CD4-positive, alpha-beta memory T cell (primary cell): ENCODE measurements at regions of chr5 and their contacts with region 1.

Region 1: DNA sequence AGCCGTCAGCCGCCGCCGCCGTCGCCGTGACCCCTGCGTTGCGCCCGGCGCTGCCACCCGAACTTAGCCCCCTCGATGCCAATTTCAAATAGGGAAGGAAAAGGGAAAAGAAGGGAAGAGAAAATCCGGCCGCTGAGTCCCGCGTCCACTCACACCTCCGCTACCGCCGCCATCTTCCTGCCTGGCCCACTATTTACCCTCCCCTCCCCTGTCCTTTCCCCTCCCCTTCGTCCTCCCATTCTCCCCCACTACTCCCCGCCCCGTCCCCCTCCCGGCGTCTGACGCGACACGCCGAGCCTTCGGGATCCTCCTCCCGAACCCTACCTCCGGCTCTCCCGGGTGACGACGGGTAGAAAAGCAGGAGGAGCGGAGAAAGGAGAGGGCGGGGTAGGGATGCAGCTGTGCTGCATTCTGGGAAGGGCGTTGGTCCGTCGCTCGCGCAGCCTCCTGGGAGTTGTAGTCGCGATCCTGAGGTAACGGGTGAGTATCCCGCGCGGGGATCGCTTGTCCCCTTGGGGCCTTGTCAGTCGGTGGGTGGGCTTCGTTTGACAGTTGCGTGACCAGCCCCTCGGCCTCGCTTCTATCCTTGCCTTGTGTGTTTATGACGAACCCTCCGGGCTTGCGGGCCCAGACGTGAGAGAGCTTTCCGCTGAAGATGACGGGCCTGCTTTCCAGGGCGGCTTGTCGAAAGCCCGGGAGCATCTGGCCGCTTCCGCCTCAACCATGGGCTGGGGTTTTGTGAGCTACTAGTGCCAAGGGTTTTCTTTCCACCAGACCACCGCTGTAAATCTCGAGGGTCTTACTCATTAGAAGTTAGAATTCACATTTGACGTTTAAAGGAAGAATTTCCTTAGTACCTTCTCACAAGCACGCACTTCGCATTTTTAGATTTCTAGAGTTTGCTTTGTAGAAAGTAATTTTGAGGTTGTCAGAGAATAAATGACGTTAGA is at the starts of genes CERT1 and POLK:
- DNase-seq: peak; percentile 92 to 97 (median 94)
- H3K4me3 ChIP-seq: peak within 1 kb of the TSS; percentile 54 to 81
- H3K4me3 Mint-ChIP-seq: peak within 1 kb of the TSS; percentile 90 to 97 (median 96)
- H3K27ac ChIP-seq: peak within 1 kb of the TSS; percentile 76
- H3K27ac Mint-ChIP-seq: peak within 1 kb of the TSS; percentile 94 to 98 (median 96)
- H3K4me1 ChIP-seq: peaks cover 44% of the 10 kb centered on the region
- H3K4me1 Mint-ChIP-seq: peaks cover 39 to 65% (median 49%) of the 10 kb centered on the region in 4 donors
- H3K27me3 ChIP-seq: no peaks in the 10 kb centered on the region
- H3K27me3 Mint-ChIP-seq: no peaks in the 10 kb centered on the region
- total RNA-seq, gene CERT1: 43.8 to 49.7 TPM
- total RNA-seq, gene POLK: 30.0 to 30.4 TPM

Region 2: GRCh38 chr5:74766849-74767578 is 744.7 kb before region 1 on chr5 and contains the starts of genes GFM2 and NSA2:
- CTCF ChIA-PET with region 1: no interaction called
- POLR2A ChIA-PET with region 1: interaction called, 3 read pairs
- intact Hi-C with region 1: loop called (anchors 10 kb)
- DNase-seq: peak; percentile 92 to 94 (median 92)
- H3K4me3 ChIP-seq: peak within 1 kb of the TSS; percentile 93 to 100
- H3K4me3 Mint-ChIP-seq: peak within 1 kb of the TSS; percentile 95 to 100 (median 100)
- H3K27ac ChIP-seq: peak within 1 kb of the TSS; percentile 86
- H3K27ac Mint-ChIP-seq: peak within 1 kb of the TSS; percentile 91 to 99 (median 99)
- H3K4me1 ChIP-seq: peaks cover 35% of the 10 kb centered on the region
- H3K4me1 Mint-ChIP-seq: peaks cover 22 to 51% (median 35%) of the 10 kb centered on the region in 4 donors
- H3K27me3 ChIP-seq: no peaks in the 10 kb centered on the region
- H3K27me3 Mint-ChIP-seq: no peaks in the 10 kb centered on the region
- total RNA-seq, gene GFM2: 21.3 to 21.6 TPM
- total RNA-seq, gene NSA2: 103 to 120 TPM

Region 3: DNA sequence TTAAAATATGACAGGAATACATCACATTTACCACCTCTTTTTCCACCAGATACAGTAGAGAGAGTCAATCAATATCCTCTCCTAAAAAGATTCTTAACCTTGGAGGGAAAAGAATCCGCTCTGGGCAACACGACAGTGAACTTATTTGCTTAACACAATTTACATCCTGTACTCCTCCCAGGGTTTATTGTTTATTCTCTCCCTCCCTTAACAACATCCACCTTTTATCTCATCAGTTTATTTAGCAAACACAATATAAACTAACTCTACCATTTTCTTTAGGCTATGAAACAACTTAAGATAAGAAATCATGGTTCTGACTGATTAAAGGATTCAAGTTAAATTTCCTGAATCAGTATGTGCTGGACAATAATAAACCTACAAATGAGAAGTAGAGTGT is 51.2 kb before region 1 on chr5:
- CTCF ChIA-PET with region 1: no interaction called
- POLR2A ChIA-PET with region 1: no interaction called
- intact Hi-C with region 1: no loop called
- DNase-seq: no peak
- H3K4me3 ChIP-seq: no peak overlapping the region
- H3K4me3 Mint-ChIP-seq: no peak overlapping the region
- H3K27ac ChIP-seq: no peak overlapping the region
- H3K27ac Mint-ChIP-seq: no peak overlapping the region
- H3K4me1 ChIP-seq: peaks cover 3% of the 10 kb centered on the region
- H3K4me1 Mint-ChIP-seq: peaks cover 26 to 46% (median 32%) of the 10 kb centered on the region in 4 donors
- H3K27me3 ChIP-seq: no peaks in the 10 kb centered on the region
- H3K27me3 Mint-ChIP-seq: no peaks in the 10 kb centered on the region

Region 4: GRCh38 chr5:75498208-75498777 is 13.4 kb before region 1 on chr5:
- CTCF ChIA-PET with region 1: no interaction called
- POLR2A ChIA-PET with region 1: no interaction called
- intact Hi-C with region 1: loop called (anchors 1 kb)
- DNase-seq: no peak
- H3K4me3 ChIP-seq: no peak overlapping the region
- H3K4me3 Mint-ChIP-seq: no peak overlapping the region
- H3K27ac ChIP-seq: no peak overlapping the region
- H3K27ac Mint-ChIP-seq: no peak overlapping the region
- H3K4me1 ChIP-seq: no peaks in the 10 kb centered on the region
- H3K4me1 Mint-ChIP-seq: peaks cover 6 to 27% (median 19%) of the 10 kb centered on the region in 4 donors
- H3K27me3 ChIP-seq: no peaks in the 10 kb centered on the region
- H3K27me3 Mint-ChIP-seq: no peaks in the 10 kb centered on the region

Region 5: GRCh38 chr5:75611311-75612225 is 99.9 kb after region 1 on chr5 and contains the start of gene ANKDD1B:
- CTCF ChIA-PET with region 1: no interaction called
- POLR2A ChIA-PET with region 1: no interaction called
- intact Hi-C with region 1: no loop called
- DNase-seq: no peak
- H3K4me3 ChIP-seq: no peak within 1 kb of the TSS
- H3K4me3 Mint-ChIP-seq: peak within 1 kb of the TSS in 6 of 8 donors; percentile 6 to 53 (median 20)
- H3K27ac ChIP-seq: no peak within 1 kb of the TSS
- H3K27ac Mint-ChIP-seq: no peak within 1 kb of the TSS
- H3K4me1 ChIP-seq: peaks cover 9% of the 10 kb centered on the region
- H3K4me1 Mint-ChIP-seq: peaks cover 3 to 6% (median 6%) of the 10 kb centered on the region in 4 donors
- H3K27me3 ChIP-seq: no peaks in the 10 kb centered on the region
- H3K27me3 Mint-ChIP-seq: peaks cover 3 to 5% of the 10 kb centered on the region in 2 donors
- total RNA-seq, gene ANKDD1B: 0.61 to 0.73 TPM

Region 6: DNA sequence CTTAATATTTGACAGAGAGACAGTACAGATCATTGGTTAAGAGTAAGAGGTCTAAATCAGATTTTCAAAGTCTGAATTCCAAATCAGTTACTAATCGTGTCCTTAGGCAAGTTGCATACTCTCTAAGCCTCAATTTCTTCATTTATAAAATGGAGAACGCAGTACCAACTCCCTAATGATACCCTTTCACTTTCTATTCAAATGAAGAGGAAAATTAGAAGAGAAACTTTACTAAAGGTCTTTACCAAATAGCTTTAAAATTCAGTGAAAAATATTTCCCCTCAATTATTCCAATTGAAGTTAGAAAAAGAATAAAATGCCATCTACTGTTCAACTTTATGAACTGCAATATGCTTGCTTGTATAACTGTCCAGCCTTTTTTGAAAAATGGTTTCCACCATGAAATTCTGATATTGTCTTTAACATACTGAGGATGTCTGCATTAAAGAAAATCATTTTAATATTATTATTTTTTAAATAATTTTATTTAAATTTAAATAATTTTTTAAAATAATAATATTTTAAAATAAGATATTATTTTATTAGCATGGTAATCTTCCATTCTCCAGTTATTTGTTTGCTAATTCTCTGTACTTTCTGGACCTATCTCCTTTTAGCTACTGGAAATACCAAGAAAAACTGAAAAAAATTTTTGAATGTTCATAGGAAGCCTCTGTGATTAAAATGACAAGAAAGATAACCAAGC is 169.6 kb after region 1 on chr5:
- CTCF ChIA-PET with region 1: no interaction called
- POLR2A ChIA-PET with region 1: interaction called, 3 read pairs
- intact Hi-C with region 1: loop called (anchors 5 kb)
- DNase-seq: peak in 4 of 5 donors; percentile 26 to 39 (median 34)
- H3K4me3 ChIP-seq: no peak overlapping the region
- H3K4me3 Mint-ChIP-seq: no peak overlapping the region
- H3K27ac ChIP-seq: no peak overlapping the region
- H3K27ac Mint-ChIP-seq: peak overlapping the region in 1 of 7 donors; percentile 29
- H3K4me1 ChIP-seq: peaks cover 5% of the 10 kb centered on the region
- H3K4me1 Mint-ChIP-seq: peaks cover 5 to 11% (median 9%) of the 10 kb centered on the region in 4 donors
- H3K27me3 ChIP-seq: no peaks in the 10 kb centered on the region
- H3K27me3 Mint-ChIP-seq: no peaks in the 10 kb centered on the region

Region 7: GRCh38 chr5:76818844-76819831 is 1307.4 kb after region 1 on chr5 and contains the start of gene F2RL1:
- CTCF ChIA-PET with region 1: no interaction called
- POLR2A ChIA-PET with region 1: no interaction called
- intact Hi-C with region 1: loop called (anchors 1 kb)
- DNase-seq: peak; percentile 43 to 58 (median 48)
- H3K4me3 ChIP-seq: peak within 1 kb of the TSS; percentile 76 to 80
- H3K4me3 Mint-ChIP-seq: peak within 1 kb of the TSS; percentile 88 to 95 (median 88)
- H3K27ac ChIP-seq: peak within 1 kb of the TSS; percentile 22
- H3K27ac Mint-ChIP-seq: peak within 1 kb of the TSS in 2 of 7 donors; percentile 3 to 22
- H3K4me1 ChIP-seq: peaks cover 21% of the 10 kb centered on the region
- H3K4me1 Mint-ChIP-seq: peaks cover 13 to 24% (median 19%) of the 10 kb centered on the region in 4 donors
- H3K27me3 ChIP-seq: no peaks in the 10 kb centered on the region
- H3K27me3 Mint-ChIP-seq: peaks cover 0 to 3% of the 10 kb centered on the region in 2 donors
- total RNA-seq, gene F2RL1: 5.1 to 5.5 TPM